Heart left ventricle (tissue), 16 donors: ENCODE measurements at regions of chr2 and their contacts with region 1.

Region 1: DNA sequence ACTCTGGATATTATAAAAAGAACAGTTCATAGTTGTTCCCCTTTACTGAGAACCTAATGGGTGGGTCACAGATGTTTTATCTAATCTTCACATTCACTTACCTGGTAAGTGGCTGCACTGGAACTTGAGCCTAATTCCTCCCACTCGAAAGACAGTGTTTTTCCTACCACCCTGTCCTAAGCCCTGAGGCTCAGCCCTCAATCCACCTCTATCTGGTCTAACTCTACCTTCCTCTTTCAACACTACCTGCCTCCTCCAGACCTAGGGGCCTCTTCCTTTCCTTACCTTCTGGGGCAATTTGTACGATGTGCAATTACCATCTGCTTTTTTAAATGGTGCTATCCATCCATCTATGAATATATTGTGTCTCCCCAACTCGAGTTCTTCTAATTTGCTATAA is 9.7 kb upstream of the KIF3C start:
- DNase-seq: no peak
- ATAC-seq: peak in 3 of 4 donors; percentile 22 to 26 (median 24)
- H3K4me3 ChIP-seq: peak overlapping the region in 1 of 12 donors; percentile 38
- H3K27ac ChIP-seq: no peak overlapping the region
- H3K4me1 ChIP-seq: peaks cover 0 to 12% (median 3%) of the 10 kb centered on the region in 12 donors
- H3K27me3 ChIP-seq: no peaks in the 10 kb centered on the region
- CTCF ChIP-seq: no peak
- POLR2A ChIP-seq: no peak

Region 2: DNA sequence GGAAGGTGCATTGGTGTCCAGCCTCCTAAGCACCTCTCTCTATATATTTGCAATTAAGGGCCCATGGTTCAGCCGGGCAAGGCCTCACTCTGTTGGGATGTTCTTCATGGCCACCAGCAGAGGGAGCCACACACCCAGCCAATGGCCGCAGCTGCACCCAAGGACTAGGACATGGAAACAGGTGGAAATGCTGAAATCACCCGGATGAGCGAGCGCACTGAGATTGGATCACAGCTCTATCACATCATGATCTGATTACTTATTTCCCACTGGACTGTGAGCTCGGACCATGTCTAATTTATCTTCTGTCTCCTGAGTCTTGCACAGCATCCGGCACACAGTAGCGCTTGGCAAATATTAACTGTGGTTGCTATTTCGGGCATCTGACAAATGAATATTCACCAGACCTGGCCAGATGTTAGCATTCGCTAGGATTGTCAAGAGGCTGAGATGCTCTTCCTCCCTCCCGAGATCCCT is 40.9 kb before region 1 on chr2:
- intact Hi-C with region 1: loop called in 2 of 10 experiments (anchors 5 kb)
- DNase-seq: peak; percentile 74 to 86 (median 80)
- ATAC-seq: peak; percentile 86 to 97 (median 95)
- H3K4me3 ChIP-seq: peak overlapping the region in 1 of 12 donors; percentile 26
- H3K27ac ChIP-seq: no peak overlapping the region
- H3K4me1 ChIP-seq: peaks cover 0 to 10% (median 0%) of the 10 kb centered on the region in 12 donors
- H3K27me3 ChIP-seq: no peaks in the 10 kb centered on the region
- CTCF ChIP-seq: peak; percentile 82 to 97 (median 94)
- POLR2A ChIP-seq: no peak

Region 3: DNA sequence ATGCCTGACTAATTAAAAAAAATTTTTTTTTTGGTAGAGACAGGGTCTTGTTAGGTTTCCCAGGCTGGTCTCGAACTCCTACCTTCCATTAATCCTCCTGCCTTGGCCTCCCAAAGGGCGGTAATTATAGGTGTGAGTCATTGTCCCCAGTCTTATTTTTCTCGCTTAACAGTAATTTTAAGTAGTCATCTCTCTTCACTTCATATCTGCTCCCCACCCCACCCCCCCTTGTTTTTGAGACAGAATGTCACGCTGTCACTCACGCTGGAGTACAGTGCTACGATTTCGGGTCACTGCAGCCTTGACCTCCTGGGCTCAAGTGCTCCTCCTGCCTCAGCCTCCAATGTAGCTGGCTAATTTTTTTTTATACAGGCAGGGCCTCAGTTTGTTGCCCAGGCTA is 69.6 kb after region 1 on chr2:
- intact Hi-C with region 1: no loop called
- DNase-seq: no peak
- ATAC-seq: no peak
- H3K4me3 ChIP-seq: no peak overlapping the region
- H3K27ac ChIP-seq: no peak overlapping the region
- H3K4me1 ChIP-seq: peaks cover 0 to 61% (median 5%) of the 10 kb centered on the region in 12 donors
- H3K27me3 ChIP-seq: no peaks in the 10 kb centered on the region
- CTCF ChIP-seq: no peak
- POLR2A ChIP-seq: no peak

Region 4: DNA sequence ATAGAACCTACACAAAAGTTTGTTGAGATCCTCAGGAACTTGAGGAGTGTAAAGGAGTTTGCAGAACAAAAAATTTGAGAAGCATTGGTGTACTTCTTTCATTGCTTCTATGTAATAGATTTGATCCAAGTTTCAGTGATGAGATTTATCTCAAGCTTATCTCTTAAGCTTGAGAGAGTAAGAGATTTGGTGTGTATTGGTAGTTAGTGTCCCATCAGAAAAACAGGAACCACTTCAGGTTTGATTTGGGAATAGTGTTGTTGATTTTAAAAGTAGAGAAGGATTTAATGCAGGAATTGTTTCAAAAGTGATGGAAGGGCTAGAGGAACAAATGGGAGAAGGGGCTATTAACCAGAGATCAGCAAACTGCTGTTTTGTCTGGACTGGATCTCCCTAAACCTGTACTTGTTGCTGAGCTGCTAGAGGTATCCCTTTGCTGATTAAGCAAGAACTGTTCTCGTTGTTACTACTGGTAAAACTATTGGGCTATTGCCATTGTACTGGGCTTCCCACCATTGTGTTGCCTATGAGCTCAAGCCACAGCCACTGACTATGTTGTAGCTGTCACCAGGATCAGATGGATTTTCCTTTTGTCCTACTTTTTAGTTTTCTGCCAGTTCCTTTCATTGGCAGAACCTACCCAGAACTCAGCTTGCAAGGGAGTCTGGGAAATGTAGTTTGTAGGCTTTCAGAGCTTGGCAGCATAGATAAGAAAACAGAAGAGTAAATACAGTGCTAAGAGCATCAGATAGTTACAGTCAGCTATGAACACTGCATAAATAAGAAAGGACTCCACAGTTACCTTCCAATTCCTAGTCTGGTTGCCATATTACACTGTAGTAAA is 81.2 kb after region 1 on chr2:
- intact Hi-C with region 1: loop called in 1 of 10 experiments (anchors 10 kb)
- DNase-seq: no peak
- ATAC-seq: peak in 3 of 4 donors; percentile 18 to 48 (median 36)
- H3K4me3 ChIP-seq: no peak overlapping the region
- H3K27ac ChIP-seq: no peak overlapping the region
- H3K4me1 ChIP-seq: peaks cover 0 to 69% (median 23%) of the 10 kb centered on the region in 12 donors
- H3K27me3 ChIP-seq: no peaks in the 10 kb centered on the region
- CTCF ChIP-seq: no peak
- POLR2A ChIP-seq: no peak

Region 5: GRCh38 chr2:26088032-26088643 is 96.2 kb after region 1 on chr2:
- intact Hi-C with region 1: loop called in 1 of 10 experiments (anchors 10 kb)
- DNase-seq: no peak
- ATAC-seq: peak in 2 of 4 donors; percentile 66 to 74
- H3K4me3 ChIP-seq: no peak overlapping the region
- H3K27ac ChIP-seq: no peak overlapping the region
- H3K4me1 ChIP-seq: peaks cover 0 to 50% (median 4%) of the 10 kb centered on the region in 12 donors
- H3K27me3 ChIP-seq: no peaks in the 10 kb centered on the region
- CTCF ChIP-seq: peak; percentile 50 to 79 (median 68)
- POLR2A ChIP-seq: no peak

Region 6: GRCh38 chr2:26530696-26531095 is 538.7 kb after region 1 on chr2:
- intact Hi-C with region 1: no loop called
- DNase-seq: peak in 1 of 5 donors; percentile 11
- ATAC-seq: no peak
- H3K4me3 ChIP-seq: no peak overlapping the region
- H3K27ac ChIP-seq: no peak overlapping the region
- H3K4me1 ChIP-seq: peaks cover 0 to 14% (median 0%) of the 10 kb centered on the region in 12 donors
- H3K27me3 ChIP-seq: peaks cover 0 to 14% (median 0%) of the 10 kb centered on the region in 9 donors
- CTCF ChIP-seq: no peak
- POLR2A ChIP-seq: no peak